Transverse colon (tissue), 4 donors: ENCODE measurements at regions of chr3 and their contacts with region 1.

Region 1: GRCh38 chr3:165895918-165896317 is 58.7 kb upstream of the BCHE start:
- DNase-seq: no peak
- H3K4me3 ChIP-seq: no peak overlapping the region
- H3K27ac ChIP-seq: no peak overlapping the region
- H3K4me1 ChIP-seq: no peaks in the 10 kb centered on the region
- H3K27me3 ChIP-seq: no peaks in the 10 kb centered on the region
- CTCF ChIP-seq: no peak
- EP300 ChIP-seq: no peak
- POLR2A ChIP-seq: no peak

Region 2: GRCh38 chr3:165874663-165875489 is 21.0 kb before region 1 on chr3:
- in situ Hi-C with region 1: no loop called
- intact Hi-C with region 1: loop called (anchors 1 kb)
- DNase-seq: no peak
- H3K4me3 ChIP-seq: no peak overlapping the region
- H3K27ac ChIP-seq: no peak overlapping the region
- H3K4me1 ChIP-seq: no peaks in the 10 kb centered on the region
- H3K27me3 ChIP-seq: no peaks in the 10 kb centered on the region
- CTCF ChIP-seq: no peak
- EP300 ChIP-seq: no peak
- POLR2A ChIP-seq: no peak

Region 3: GRCh38 chr3:166190360-166190759 is 294.4 kb after region 1 on chr3:
- in situ Hi-C with region 1: no loop called
- intact Hi-C with region 1: no loop called
- DNase-seq: no peak
- H3K4me3 ChIP-seq: no peak overlapping the region
- H3K27ac ChIP-seq: no peak overlapping the region
- H3K4me1 ChIP-seq: no peaks in the 10 kb centered on the region
- H3K27me3 ChIP-seq: no peaks in the 10 kb centered on the region
- CTCF ChIP-seq: no peak
- EP300 ChIP-seq: no peak
- POLR2A ChIP-seq: no peak

Region 4: GRCh38 chr3:167456157-167456799 is 1560.4 kb after region 1 on chr3:
- in situ Hi-C with region 1: no loop called
- intact Hi-C with region 1: no loop called
- DNase-seq: no peak
- H3K4me3 ChIP-seq: no peak overlapping the region
- H3K27ac ChIP-seq: no peak overlapping the region
- H3K4me1 ChIP-seq: no peaks in the 10 kb centered on the region
- H3K27me3 ChIP-seq: no peaks in the 10 kb centered on the region
- CTCF ChIP-seq: no peak
- EP300 ChIP-seq: no peak
- POLR2A ChIP-seq: no peak